Activated CD4-positive, alpha-beta T cell treated with anti-CD3 and anti-CD28 coated beads, Interleukin-2, amount 10 ng/mL, durations not matched to agents 24 days and 14 days (primary cell): ENCODE measurements at regions of chr3 and their contacts with region 1.

Region 1: DNA sequence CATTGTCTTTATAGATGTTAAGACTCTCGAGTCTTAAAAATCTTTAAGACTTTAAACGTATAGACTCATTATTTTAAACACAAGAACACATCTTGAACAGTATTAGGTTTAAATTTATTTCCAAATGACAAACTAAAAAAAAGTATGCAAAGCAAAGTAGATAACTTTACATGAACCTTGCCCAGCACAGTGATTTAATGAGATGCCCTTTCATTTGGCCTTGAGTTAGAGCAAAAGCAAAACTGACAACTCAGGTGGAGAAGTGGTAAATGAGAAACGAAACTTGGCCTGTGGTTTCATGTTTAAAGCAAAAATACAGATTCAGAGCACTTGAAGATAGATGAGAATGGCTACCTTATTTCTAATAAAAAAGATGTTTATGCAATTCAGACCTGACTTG is 8.6 kb downstream of the GPR15 start:
- DNase-seq: peak; percentile 82
- H3K4me3 Mint-ChIP-seq: peak overlapping the region; percentile 45
- H3K27ac Mint-ChIP-seq: peak overlapping the region; percentile 46
- H3K4me1 Mint-ChIP-seq: peaks cover 50% of the 10 kb centered on the region
- H3K27me3 Mint-ChIP-seq: no peaks in the 10 kb centered on the region

Region 2: DNA sequence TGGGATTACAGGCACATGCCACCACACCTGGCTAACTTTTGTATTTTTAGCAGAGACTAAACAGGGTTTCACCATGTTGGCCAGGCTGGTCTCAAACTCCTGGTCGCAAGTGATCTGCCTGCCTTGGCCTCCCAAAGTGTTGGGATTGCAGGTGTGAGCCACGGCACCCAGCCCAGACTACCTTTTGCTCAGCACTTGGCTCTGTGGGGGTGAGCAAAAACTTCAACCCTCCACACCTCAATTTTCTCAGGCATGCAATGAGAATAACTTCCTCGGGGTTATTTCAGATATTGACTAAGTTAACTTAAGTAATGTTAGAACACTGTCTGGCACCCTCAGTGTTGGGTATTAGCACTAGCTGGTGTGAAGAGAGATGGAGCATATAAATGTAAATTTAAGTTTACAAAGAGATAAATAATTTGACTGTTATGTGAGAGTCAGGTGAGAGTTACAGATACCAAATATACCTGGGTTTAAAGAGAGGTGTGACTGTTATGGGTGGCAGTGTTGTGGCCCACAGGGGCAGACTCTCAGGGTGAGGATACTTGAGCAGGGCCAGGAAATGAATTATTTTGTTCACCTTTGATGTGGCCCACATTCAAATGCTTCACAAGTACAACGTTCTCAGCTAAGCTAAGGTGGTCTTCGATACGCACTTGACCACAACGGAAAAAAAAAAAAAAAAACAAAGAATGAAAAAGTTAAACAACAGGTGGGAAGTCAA is 24.1 kb after region 1 on chr3:
- intact Hi-C with region 1: loop called (anchors 1 kb)
- DNase-seq: peak; percentile 76
- H3K4me3 Mint-ChIP-seq: peak overlapping the region; percentile 58
- H3K27ac Mint-ChIP-seq: peak overlapping the region; percentile 64
- H3K4me1 Mint-ChIP-seq: peaks cover 66% of the 10 kb centered on the region
- H3K27me3 Mint-ChIP-seq: no peaks in the 10 kb centered on the region